Posterior cingulate gyrus (tissue), 11 donors: ENCODE measurements at regions of chr15 and their contacts with region 1.

Region 1: DNA sequence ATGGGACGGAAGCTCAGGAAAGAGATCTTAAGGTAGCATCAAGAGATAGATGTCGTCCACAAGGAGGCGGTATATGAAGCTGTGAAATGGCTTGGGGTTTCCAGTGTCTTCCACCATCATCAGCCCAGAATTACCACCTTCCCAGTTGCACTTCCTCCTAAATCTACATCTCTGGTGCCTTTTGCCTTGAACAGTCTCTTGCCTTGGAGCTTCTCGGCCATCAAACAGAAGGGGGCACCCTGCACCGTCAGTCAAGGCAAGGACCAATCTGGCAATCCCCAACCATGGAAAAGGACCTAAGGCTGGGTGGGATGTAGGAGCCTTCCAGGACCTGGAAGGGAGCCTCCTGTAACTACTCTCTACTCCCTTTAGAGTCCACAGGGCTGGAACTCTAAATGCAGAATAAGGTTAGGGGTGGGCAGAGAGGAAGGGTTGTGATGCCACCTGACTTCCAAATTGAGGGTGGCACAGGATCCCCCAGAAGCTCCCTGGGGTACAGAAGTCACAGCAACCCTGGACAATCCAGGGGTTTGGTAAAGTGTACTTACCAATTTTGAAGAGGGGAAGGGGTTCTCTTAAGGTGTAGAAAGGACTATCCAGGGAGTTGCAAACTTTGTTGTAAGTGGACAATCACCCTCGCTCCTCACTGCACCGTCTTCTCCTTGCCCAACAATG is 1.0 kb upstream of the RYR3 start:
- DNase-seq: peak in 8 of 10 donors; percentile 32 to 95 (median 70)

Region 2: DNA sequence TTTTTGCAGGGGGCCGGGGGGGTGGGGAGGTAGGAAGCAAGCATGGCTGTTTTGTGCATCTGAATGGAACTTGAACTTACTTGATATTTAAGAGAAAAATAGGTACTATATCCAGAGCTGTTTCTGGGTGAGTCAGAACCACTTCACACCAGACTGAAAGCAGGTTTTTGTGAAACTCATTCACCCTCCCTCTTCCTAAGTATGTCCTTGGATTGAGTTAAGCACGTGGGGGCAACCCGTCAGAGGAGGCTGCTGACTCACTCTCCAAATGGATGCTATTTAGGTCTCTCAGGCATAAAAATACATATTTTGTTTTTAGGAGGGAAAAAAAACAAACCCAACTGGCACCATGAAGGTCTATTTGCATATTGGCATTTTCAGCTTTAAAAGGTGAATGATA is 271.3 kb after region 1 on chr15:
- intact Hi-C with region 1: loop called (anchors 10 kb)
- DNase-seq: peak in 8 of 10 donors; percentile 13 to 88 (median 46)